Ovary (tissue), 10 donors: ENCODE measurements at regions of chr3 and their contacts with region 1.

Region 1: DNA sequence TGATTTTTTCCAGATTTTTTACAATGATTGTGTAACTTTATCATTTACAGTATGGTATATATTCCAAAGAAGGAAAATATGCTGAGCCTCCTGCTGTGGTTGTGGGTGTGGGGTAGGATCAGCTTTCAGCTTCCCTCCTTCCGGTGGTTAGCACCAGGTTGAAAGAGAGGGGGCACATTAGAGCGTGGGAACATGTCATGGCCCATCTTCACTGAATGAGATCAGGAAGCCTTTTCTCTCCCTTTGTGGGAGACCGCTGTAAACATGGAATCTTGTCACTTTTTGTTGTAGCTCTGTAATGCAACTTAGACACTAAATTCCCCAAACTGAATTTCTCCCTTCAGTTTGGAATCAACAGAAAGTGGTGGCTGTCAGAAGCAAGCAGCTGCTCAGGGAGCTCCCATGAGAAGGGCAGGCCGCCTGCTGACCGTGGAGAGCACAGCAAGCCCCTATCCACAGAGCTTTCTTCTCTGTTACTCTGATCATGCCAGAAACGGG is 86.7 kb upstream of the LIMD1 start:
- DNase-seq: no peak
- H3K4me3 ChIP-seq: no peak overlapping the region
- H3K27ac ChIP-seq: no peak overlapping the region
- H3K4me1 ChIP-seq: no peaks in the 10 kb centered on the region
- H3K27me3 ChIP-seq: no peaks in the 10 kb centered on the region
- CTCF ChIP-seq: no peak
- EP300 ChIP-seq: no peak
- POLR2A ChIP-seq: no peak

Region 2: DNA sequence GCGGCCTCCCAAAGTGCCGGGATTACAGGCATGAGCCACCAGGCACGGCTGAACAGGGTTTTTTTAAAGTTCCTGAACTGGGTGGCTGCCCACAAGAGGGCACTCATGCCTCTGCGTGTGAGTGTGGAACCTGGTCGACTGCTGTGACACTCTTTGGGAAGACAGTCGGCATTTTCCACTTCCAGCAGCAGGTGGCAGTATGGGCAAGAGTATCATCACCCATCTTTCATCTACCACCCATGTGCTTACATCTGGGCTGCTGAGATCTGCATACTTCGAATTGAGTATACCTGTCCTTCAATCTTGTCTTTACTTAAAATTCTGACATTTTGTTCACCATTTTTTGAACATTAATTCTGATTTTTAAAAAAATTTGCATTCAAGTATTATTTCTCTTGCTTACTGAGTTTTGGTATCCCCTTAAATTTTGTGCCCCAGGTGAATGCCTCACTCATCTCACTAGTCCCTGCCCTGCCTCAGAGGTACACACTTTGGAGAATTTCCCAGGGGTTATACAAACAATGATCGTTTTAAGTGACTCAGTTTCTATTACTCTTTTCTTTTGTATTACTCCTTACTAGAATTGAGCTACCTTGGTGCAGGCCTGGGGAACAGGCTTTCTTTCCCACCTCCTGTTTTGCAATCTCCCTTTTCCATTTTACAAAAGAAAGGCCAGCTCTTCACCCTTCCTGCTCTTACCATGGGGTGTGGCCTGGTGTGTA is 470.0 kb before region 1 on chr3:
- intact Hi-C with region 1: loop called in 2 of 4 experiments (anchors 10 kb)
- DNase-seq: peak; percentile 80 to 89 (median 84)
- H3K4me3 ChIP-seq: no peak overlapping the region
- H3K27ac ChIP-seq: no peak overlapping the region
- H3K4me1 ChIP-seq: peaks cover 7% of the 10 kb centered on the region
- H3K27me3 ChIP-seq: no peaks in the 10 kb centered on the region
- CTCF ChIP-seq: peak; percentile 60 to 79 (median 73)
- EP300 ChIP-seq: no peak
- POLR2A ChIP-seq: no peak

Region 3: DNA sequence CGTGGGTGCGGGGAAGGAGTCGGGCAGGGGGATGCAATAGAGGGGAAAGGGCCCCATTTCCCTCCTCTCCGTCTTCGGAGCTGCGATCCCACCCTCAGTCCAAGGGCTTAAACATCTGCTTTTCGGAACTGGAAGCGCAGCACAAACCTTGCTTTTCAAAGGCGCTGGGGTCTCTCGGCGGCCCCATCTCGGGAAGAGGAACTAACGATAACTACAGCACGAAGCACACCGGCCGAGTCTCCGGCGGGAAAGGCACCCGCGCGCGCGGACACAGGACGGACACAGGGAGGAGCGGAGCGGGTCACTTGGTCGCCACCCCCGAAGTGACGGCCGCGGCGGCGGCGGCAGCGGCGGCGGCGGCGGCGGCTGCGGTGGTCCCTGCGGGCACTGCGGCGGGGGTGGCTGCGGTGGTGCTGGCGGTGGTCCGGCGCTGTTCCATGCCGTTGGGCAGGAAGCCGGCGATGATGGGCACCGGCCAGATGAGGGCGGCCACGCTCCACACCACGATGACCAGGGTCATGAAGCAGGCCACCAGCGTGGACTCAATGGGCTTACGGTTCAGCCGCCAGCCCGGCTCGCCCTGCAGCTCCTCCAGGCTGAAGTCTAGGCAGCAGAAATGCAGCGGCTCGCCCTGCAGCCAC is 282.9 kb before region 1 on chr3:
- intact Hi-C with region 1: loop called in 1 of 4 experiments (anchors 10 kb)
- DNase-seq: peak; percentile 37 to 76 (median 53)
- H3K4me3 ChIP-seq: peak overlapping the region; percentile 54
- H3K27ac ChIP-seq: no peak overlapping the region
- H3K4me1 ChIP-seq: no peaks in the 10 kb centered on the region
- H3K27me3 ChIP-seq: no peaks in the 10 kb centered on the region
- CTCF ChIP-seq: no peak
- EP300 ChIP-seq: no peak
- POLR2A ChIP-seq: no peak

Region 4: DNA sequence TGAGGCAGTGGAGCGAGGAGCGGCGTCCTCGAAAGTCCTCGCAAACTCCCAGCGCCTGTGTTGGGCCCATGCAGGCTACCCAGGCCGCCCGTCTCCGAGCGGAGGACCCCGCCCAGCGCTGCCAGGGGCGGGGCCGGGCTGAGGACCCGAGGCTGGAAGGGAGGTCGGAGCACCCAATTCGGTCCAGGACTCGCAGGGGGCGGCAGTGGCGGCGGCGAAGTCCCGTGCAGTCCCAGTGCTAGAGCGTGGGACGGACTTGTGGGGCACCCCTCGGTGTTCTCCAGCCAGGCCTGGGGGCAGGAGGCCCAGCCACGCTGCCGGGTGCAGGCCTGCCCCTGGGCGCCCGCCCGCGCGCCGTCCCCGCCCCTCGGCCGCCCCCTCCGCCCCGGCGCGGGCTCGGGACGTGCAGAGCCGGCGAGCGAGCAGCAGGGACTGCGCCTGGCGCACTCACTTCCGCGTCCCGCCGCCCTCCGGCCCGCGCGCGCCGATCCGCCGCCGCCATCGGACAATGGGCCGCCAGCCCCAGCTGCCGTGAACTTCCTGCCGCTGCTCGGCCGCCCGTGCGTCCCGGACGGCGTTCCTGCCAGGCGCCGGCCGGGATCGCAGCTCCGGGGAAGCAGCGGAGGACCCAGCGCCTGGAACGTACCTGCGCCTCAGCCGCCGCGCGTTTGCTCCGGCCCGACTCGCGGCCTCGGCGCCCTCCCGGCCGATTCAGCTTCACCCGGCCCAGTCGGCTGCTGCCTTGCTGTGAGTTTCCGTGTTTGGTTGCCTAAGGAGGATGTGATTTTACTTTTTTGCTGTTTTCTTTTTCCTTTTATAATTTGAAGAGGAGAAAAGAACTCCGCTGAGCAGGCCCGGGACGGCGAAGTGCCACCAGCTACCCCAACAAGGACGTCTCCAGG is 86.1 kb after region 1 on chr3:
- intact Hi-C with region 1: loop called in 2 of 4 experiments (anchors 5 to 10 kb)
- DNase-seq: peak; percentile 59 to 80 (median 65)
- H3K4me3 ChIP-seq: peak overlapping the region; percentile 56
- H3K27ac ChIP-seq: peak overlapping the region; percentile 6 to 78
- H3K4me1 ChIP-seq: peaks cover 29% of the 10 kb centered on the region
- H3K27me3 ChIP-seq: no peaks in the 10 kb centered on the region
- CTCF ChIP-seq: peak in 1 of 3 donors; percentile 14
- EP300 ChIP-seq: no peak
- POLR2A ChIP-seq: no peak

Region 5: GRCh38 chr3:46423588-46423987 is 915.7 kb after region 1 on chr3:
- intact Hi-C with region 1: loop called in 1 of 4 experiments (anchors 10 kb)
- DNase-seq: no peak
- H3K4me3 ChIP-seq: no peak overlapping the region
- H3K27ac ChIP-seq: no peak overlapping the region
- H3K4me1 ChIP-seq: no peaks in the 10 kb centered on the region
- H3K27me3 ChIP-seq: no peaks in the 10 kb centered on the region
- CTCF ChIP-seq: no peak
- EP300 ChIP-seq: no peak
- POLR2A ChIP-seq: no peak